AG04450 (cell line): ENCODE measurements at regions of chr1 and their contacts with region 1.

Region 1: DNA sequence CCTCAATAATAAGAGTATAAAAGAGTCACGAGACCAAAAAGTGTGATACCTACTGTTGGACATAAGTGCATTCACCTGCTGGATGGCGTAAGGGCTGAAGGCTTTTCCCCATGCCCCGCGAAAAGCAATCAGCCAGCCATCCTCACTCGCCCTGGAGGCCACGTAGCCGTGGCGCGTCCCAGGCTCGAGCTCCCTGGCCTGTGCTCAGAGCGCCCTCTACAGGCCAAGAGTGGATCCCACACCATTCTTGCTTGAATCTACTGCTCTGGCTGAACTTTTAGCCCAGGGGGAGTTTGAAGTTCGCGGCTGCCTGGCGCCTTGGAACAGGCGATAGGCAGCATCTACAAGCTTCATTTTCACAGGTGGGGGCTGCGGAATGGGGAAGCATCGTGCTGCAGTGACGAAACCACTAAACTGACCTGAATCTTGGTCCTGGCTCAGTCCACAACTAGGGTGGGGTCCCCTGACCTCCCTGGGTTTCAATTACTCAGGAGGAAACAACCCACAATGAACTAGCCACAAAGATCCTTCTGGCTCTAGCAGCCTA is 70.3 kb upstream of the SERBP1 start:
- DNase-seq: peak; percentile 59
- H3K4me3 ChIP-seq: no peak overlapping the region
- H3K27ac ChIP-seq: no peak overlapping the region
- H3K27me3 ChIP-seq: peaks cover 3% of the 10 kb centered on the region
- CTCF ChIP-seq: peak; percentile 99

Region 2: DNA sequence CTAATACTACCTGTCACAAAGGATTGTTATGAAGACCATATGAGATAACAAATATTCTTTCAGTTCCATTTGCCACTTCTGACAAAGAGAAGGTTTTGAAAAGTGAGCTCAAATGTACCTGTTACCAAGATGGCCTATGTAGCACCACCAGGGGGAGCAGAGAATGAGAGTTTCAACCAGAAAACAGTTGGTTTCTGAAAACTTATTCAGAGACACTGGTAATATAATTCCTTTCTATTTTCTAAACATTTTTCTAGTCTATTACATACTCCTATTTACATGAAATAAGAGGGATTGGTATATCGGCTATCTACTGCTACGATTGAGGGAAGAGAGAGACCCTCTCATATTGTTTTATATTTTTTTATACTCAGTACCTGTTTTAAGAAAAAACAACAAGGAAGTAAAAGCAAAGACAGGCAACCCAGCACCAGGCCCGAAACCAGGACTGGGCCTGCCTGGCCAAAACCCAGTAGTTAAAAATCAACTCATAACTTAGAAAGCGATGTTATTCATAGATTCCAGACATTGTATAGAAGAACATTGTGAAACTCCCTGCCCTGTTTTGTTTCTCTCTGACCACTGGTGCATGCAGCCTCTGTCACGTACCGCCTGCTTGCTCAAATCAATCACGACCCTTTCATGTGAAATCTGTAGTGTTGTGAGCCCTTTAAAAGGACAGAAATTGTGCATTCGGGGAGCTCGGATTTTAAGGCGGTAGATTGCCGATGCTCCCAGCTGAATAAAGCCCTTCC is 285.9 kb before region 1 on chr1:
- CTCF ChIA-PET with region 1: interaction called, 190 read pairs
- POLR2A ChIA-PET with region 1: no interaction called
- DNase-seq: no peak
- H3K4me3 ChIP-seq: no peak overlapping the region
- H3K27ac ChIP-seq: no peak overlapping the region
- H3K27me3 ChIP-seq: peaks cover 6% of the 10 kb centered on the region
- CTCF ChIP-seq: peak; percentile 73

Region 3: GRCh38 chr1:67332653-67333529 is 167.6 kb before region 1 on chr1:
- CTCF ChIA-PET with region 1: interaction called, 15 read pairs
- POLR2A ChIA-PET with region 1: no interaction called
- DNase-seq: no peak
- H3K4me3 ChIP-seq: no peak overlapping the region
- H3K27ac ChIP-seq: no peak overlapping the region
- H3K27me3 ChIP-seq: peaks cover 4% of the 10 kb centered on the region
- CTCF ChIP-seq: no peak

Region 4: DNA sequence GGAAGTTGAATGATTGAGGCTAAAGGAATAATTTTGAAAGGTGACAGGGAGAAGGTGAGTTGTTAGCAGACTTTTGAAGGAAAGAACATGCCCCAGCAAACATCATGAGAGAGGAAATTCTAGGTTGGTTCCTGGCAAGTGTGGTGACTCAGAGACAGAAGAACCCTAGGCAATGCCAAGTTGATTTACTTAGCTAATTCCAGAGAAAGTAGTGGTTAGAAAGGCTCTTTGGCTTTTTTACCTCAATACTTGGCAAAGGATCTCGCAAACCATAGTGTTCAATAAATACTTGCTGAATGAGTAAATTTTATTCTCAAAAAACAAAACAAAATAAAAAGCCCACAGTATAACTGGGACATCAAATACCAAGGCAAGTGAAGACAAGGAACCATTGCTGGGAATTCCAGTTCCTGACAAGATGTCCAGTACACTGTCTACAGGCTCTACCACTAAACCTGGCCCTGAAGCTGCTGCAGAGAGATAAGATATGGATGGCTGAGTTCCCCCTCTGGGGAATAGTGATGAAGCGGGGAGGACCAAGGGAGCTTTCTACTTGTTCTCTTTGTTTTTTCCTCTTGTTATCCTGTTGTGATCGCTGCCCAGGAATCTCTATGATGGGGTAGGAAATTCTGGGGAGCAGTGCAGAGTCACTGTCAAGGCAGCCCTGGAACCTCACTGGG is 144.6 kb before region 1 on chr1:
- CTCF ChIA-PET with region 1: interaction called, 218 read pairs
- POLR2A ChIA-PET with region 1: no interaction called
- DNase-seq: peak; percentile 15
- H3K4me3 ChIP-seq: no peak overlapping the region
- H3K27ac ChIP-seq: no peak overlapping the region
- H3K27me3 ChIP-seq: peaks cover 3% of the 10 kb centered on the region
- CTCF ChIP-seq: no peak

Region 5: DNA sequence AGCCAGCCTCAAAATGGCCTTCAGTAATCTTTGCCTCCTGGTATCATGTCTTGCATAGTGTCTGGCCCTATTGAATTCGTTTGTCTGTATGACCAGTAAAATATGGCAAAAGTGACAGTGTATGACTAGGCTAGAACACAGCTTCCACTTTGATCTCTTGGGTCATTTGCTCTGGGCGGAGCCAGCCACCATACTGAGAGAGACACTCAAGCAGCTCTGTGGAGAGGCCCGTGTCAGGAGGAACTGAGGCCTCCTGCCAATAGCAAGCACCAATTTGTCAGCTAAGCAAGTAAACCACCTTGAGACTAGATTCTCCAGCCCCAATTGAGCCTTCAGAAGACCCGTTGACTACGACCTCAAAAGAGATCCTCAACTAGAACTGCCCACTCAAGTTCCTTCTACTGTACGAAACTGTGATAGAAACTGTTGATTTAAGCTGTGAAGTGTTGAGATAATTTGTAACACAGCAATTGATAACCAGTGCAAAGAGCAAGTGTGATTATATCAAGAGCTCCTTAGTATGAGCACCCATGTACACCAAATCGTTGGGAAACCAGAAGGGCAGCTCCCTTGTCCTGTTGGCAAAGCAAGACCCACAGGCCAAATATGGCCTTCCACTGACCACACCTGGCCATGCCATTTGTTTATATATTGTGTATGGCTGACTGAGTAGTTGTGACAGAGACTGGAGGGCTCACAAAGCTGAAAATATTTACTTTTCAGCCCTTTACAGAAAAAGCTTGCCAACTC is 17.6 kb before region 1 on chr1:
- CTCF ChIA-PET with region 1: interaction called, 14 read pairs
- POLR2A ChIA-PET with region 1: no interaction called
- DNase-seq: no peak
- H3K4me3 ChIP-seq: no peak overlapping the region
- H3K27ac ChIP-seq: no peak overlapping the region
- H3K27me3 ChIP-seq: peaks cover 9% of the 10 kb centered on the region
- CTCF ChIP-seq: no peak

Region 6: DNA sequence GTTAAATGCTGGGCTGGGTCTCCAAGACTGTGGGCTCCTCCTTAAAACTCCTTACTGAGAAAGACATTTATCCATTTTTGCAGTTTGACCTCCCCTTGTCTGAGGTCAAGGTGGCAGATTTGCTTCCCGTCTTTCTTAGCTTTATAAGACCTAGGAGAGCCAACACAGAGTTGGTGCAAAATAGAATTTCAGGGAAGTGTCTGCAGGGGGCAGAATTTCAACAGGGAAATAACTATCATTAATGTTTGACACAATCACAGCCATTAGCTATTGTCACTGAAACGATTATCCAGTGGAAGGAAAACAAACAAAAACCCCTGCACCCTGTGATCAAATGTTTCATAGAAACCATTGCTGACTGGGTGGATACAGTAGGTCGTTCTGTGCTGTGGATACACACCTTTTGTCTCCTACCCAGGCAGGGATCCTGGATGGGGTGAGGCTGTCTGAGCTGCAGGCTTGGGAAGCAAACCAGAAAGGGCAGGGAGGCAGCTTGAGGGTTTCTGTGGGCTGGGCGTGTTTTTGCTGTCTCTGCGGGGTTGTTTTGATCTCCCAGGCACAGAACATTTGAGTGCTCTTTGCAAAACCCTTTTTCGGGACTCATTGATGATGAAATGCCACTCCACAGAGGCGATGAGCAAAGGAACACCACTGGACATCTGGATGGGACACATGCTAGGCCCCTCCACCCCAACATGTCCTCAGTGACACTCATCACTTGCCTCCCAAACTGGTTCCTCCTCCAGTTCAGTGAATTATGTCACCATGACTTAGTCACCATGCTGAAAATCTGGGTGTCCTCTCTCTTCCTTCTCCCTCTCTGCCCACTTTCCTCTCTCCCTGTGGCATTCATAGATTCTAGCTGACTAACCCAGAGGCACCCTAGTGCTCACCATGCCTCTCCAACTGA is 23.9 kb after region 1 on chr1:
- CTCF ChIA-PET with region 1: interaction called, 12 read pairs
- POLR2A ChIA-PET with region 1: no interaction called
- DNase-seq: no peak
- H3K4me3 ChIP-seq: no peak overlapping the region
- H3K27ac ChIP-seq: no peak overlapping the region
- H3K27me3 ChIP-seq: peaks cover 2% of the 10 kb centered on the region
- CTCF ChIP-seq: peak; percentile 20; the same call in 1 of the 2 replicates